ENCODE measurements at regions of chr7 and their contacts with region 1.

Region 1: DNA sequence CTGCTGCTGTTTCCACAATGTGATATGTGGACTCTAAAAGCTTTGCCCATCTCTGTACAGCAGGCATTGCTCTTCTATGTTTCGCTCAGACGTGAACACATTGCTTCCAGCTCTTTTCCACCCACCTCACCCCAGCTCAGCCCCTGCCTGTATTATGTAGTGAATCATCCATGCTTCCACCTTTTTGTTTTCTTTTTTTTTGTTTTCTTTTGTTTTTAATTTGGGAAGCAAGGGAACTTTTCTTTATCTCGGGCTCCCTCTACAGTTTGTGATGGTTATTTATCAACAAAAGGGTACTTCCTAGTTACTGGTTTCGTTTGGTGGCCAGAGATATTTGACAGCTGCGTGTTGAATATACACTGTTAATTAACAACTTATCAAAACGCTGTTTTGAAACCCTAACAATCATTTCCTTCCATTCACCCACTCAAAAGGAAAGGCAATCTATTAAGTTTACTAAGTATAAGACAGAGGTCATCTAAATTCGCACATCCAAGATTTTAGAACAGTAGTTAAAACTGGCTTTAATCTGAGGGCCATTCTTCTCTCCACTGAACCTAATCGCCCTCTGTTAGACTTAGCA is 127.9 kb upstream of the STK17A start:
- DNase-seq: peak; percentile 13
- ATAC-seq: peak; percentile 92
- H3K4me3 ChIP-seq: no peak overlapping the region
- H3K27ac ChIP-seq: no peak overlapping the region
- H3K4me1 ChIP-seq: no peaks in the 10 kb centered on the region
- H3K27me3 ChIP-seq: no peaks in the 10 kb centered on the region; a peak in 2 of 4 replicates
- CTCF ChIP-seq: peak; percentile 44 to 57 (median 45)
- EP300 ChIP-seq: peak in 1 of 2 experiments; percentile 13; a peak in 1 of 4 replicates
- POLR2A ChIP-seq: no peak
- RAD21 ChIP-seq: peak; percentile 50; the same call in 1 of the 2 replicates

Region 2: DNA sequence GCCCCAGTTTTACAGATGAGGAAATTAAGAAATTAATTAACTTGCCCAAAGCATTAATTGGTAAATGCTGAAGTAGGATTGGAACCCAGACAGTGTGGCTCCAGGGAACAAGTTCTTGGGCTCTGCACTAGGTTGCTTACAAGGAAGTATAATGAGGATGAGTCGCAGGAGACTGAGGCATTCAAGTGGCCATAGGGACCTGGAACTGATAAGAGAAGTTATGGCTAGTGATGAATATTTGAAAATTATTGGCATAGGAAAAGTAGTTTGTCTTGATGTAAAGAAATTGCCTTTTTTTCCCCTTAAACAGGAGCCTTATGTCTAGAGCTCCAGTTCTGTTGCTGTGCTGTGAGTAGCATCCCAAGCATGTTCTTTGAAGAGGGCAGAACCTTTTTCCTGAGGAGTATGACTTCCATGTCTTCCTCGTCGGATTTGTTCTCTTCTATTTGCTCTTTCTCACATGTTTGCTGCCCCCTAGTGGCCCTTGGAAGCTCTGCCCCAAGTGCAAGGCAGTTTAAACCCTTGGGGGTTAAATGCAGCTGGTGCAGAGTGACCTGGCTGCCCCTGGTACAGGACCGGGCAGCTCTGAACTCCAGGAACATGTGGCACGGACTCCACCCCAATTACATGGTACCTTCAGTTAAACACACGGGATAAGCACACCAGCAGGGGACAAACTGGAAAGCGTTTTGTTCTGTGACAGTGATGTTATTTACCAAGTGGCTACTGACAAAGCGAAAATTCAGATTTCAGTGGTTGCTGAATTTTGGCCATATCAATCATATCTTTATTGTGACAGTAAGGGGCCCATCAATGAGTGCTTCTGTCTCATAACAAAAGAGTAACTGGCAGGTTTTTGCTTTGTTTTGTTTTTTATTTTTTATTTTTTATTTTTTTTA is 193.8 kb before region 1 on chr7:
- CTCF ChIA-PET with region 1: interaction called, 10 read pairs
- POLR2A ChIA-PET with region 1: no interaction called
- RAD21 ChIA-PET with region 1: interaction called, 7 read pairs
- SMC1A ChIA-PET with region 1: interaction called, 6 read pairs
- in situ Hi-C with region 1: no loop called
- intact Hi-C with region 1: no loop called
- DNase-seq: peak; percentile 33
- ATAC-seq: peak; percentile 99
- H3K4me3 ChIP-seq: no peak overlapping the region
- H3K27ac ChIP-seq: no peak overlapping the region
- H3K4me1 ChIP-seq: no peaks in the 10 kb centered on the region
- H3K27me3 ChIP-seq: no peaks in the 10 kb centered on the region
- CTCF ChIP-seq: peak; percentile 90 to 95 (median 90)
- EP300 ChIP-seq: no peak
- POLR2A ChIP-seq: no peak
- RAD21 ChIP-seq: peak; percentile 96

Region 3: DNA sequence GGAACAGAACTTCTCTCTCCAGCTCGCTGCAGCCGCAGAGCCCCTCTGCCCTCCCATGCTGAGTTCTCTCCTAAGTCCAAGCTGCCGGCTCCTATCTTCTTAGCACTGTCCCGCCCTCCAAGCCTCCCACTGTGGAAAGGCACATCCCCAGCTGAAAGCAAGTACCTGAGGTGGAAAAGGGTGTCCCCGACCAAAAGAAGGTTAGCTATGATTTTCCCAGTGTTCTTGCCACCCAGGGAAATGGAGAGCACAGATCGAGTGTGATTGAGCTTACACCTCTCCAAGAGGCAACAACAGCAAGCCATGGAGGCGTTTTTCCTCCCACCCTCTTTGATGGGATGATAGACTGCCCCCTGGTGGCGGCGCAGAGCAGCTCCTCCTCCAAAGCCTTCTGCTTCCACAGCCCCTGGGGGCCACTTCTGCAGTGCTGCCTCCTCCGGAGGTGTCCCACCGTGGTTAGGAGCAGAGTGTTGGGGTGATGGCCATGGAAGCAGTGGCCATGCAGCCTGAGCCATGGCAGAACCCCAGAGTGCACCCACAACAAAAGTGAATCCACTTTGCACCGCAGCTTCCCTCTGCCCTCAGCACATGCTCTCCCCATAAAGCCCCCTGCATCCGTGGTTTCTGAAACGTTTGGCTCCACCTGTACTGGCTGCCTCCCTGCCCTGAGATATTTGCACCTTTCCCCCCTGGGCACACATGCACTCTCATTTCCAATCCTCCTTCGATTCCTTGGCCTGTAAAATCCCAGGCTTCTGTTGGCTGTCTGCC is 15.2 kb before region 1 on chr7:
- CTCF ChIA-PET with region 1: interaction called, 69 read pairs
- POLR2A ChIA-PET with region 1: interaction called, 3 read pairs
- RAD21 ChIA-PET with region 1: interaction called, 22 read pairs
- SMC1A ChIA-PET with region 1: interaction called, 21 read pairs
- in situ Hi-C with region 1: no loop called
- intact Hi-C with region 1: no loop called
- DNase-seq: peak; percentile 13
- ATAC-seq: peak; percentile 97
- H3K4me3 ChIP-seq: no peak overlapping the region
- H3K27ac ChIP-seq: no peak overlapping the region
- H3K4me1 ChIP-seq: no peaks in the 10 kb centered on the region
- H3K27me3 ChIP-seq: no peaks in the 10 kb centered on the region; a peak in 1 of 4 replicates
- CTCF ChIP-seq: peak; percentile 81 to 92 (median 89)
- EP300 ChIP-seq: no peak
- POLR2A ChIP-seq: no peak
- RAD21 ChIP-seq: peak; percentile 66

Region 4: DNA sequence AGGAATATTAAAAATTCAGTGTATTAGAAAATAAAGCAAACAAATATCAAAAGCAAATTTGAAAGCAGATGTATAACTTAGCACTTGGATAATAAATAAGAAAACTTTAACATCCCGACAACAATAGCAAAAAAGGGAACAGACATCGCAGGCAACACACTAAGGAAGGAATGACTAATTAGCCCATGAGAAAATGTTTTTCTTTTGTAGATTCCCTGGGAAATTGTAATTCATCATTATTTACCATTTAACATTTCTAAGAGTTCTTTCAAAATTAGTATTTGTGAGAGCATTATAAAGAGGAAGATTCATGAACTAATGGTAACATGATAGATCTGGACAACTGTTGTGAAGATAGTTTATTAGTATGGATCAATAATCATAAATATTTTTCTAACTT is 21.9 kb after region 1 on chr7:
- CTCF ChIA-PET with region 1: interaction called, 10 read pairs
- POLR2A ChIA-PET with region 1: no interaction called
- RAD21 ChIA-PET with region 1: interaction called, 4 read pairs
- SMC1A ChIA-PET with region 1: interaction called, 3 read pairs
- in situ Hi-C with region 1: no loop called
- intact Hi-C with region 1: no loop called
- DNase-seq: no peak
- ATAC-seq: no peak
- H3K4me3 ChIP-seq: no peak overlapping the region
- H3K27ac ChIP-seq: no peak overlapping the region
- H3K4me1 ChIP-seq: no peaks in the 10 kb centered on the region
- H3K27me3 ChIP-seq: no peaks in the 10 kb centered on the region
- CTCF ChIP-seq: no peak
- EP300 ChIP-seq: no peak
- POLR2A ChIP-seq: no peak
- RAD21 ChIP-seq: no peak

Region 5: GRCh38 chr7:43721193-43721806 is 266.3 kb after region 1 on chr7:
- CTCF ChIA-PET with region 1: interaction called, 4 read pairs
- POLR2A ChIA-PET with region 1: no interaction called
- RAD21 ChIA-PET with region 1: interaction called, 8 read pairs
- SMC1A ChIA-PET with region 1: interaction called, 5 read pairs
- in situ Hi-C with region 1: no loop called
- intact Hi-C with region 1: loop called (anchors 5 kb)
- DNase-seq: no peak
- ATAC-seq: peak; percentile 52
- H3K4me3 ChIP-seq: no peak overlapping the region
- H3K27ac ChIP-seq: no peak overlapping the region
- H3K4me1 ChIP-seq: no peaks in the 10 kb centered on the region
- H3K27me3 ChIP-seq: no peaks in the 10 kb centered on the region
- CTCF ChIP-seq: peak; percentile 40 to 64 (median 44); a peak in 5 of 6 replicates
- EP300 ChIP-seq: no peak
- POLR2A ChIP-seq: no peak
- RAD21 ChIP-seq: peak; percentile 68

Region 6: DNA sequence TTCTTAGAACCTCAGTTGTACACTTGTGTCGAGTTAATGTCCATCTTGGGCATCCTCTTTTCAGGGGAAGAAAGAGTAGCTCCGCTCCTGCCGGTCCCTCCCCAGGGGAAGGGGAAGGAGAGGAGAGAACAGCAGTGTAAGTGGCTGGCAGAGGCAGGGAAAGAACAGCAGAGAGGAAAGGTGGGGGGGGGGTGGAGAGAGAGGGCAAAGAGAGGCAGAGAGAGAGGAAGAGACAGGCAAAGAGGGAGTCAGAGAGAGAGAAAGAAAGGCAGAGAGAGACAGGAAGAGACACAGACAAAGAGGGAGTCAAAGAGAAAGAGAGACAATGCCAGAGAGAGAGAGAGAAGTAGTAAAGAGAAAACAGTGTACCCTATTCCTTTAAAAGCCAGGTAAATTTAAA is 360.3 kb after region 1 on chr7:
- CTCF ChIA-PET with region 1: no interaction called
- POLR2A ChIA-PET with region 1: no interaction called
- RAD21 ChIA-PET with region 1: no interaction called
- SMC1A ChIA-PET with region 1: no interaction called
- in situ Hi-C with region 1: no loop called
- intact Hi-C with region 1: no loop called
- DNase-seq: no peak
- ATAC-seq: no peak
- H3K4me3 ChIP-seq: no peak overlapping the region
- H3K27ac ChIP-seq: no peak overlapping the region
- H3K4me1 ChIP-seq: no peaks in the 10 kb centered on the region
- H3K27me3 ChIP-seq: no peaks in the 10 kb centered on the region
- CTCF ChIP-seq: no peak
- EP300 ChIP-seq: no peak
- POLR2A ChIP-seq: no peak
- RAD21 ChIP-seq: no peak